Activated naive CD8-positive, alpha-beta T cell treated with anti-CD3 and anti-CD28 coated beads, Interleukin-2, amount 10 ng/mL, durations not matched to agents 7 days and 5 days (primary cell): ENCODE measurements at regions of chr5 and their contacts with region 1.

Region 1: DNA sequence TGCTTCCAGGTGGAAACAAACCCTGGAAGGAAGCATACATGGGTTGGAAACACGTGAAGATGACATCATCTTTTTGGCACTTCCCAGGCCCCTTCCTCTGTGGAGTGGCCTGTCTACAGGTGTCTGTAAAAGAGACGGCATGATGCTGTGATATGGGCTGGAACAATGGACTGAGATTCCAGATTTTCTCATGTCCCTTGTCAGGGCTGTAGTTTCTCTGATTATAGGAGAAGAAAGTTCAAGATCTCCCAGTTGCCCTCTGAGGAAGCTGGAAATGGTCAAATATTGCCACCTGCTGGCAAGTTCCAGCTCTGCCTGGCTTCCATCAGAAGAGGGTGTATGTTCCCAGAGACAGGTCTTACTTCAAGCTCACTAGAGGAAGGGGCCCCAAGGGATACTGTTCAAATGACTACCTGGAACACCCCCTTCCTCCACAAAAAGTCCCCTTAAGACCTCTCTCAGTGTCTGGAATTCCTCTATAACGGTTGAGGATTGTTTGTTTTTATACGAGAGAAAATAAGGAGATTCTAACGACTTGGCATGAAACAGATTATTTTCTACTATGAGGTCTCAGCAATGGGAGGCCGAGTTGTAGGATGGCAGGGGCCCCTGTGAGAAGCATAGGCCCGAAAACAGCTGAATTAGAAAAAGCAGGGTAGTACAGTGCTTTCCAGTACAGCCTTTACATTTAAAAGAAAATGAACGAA is 7.3 kb upstream of the ANXA6 start:
- DNase-seq: peak; percentile 72
- ATAC-seq: peak; percentile 94
- H3K4me3 Mint-ChIP-seq: no peak overlapping the region
- H3K27ac Mint-ChIP-seq: no peak overlapping the region
- H3K4me1 Mint-ChIP-seq: peaks cover 8% of the 10 kb centered on the region
- H3K27me3 Mint-ChIP-seq: peaks cover 4% of the 10 kb centered on the region

Region 2: DNA sequence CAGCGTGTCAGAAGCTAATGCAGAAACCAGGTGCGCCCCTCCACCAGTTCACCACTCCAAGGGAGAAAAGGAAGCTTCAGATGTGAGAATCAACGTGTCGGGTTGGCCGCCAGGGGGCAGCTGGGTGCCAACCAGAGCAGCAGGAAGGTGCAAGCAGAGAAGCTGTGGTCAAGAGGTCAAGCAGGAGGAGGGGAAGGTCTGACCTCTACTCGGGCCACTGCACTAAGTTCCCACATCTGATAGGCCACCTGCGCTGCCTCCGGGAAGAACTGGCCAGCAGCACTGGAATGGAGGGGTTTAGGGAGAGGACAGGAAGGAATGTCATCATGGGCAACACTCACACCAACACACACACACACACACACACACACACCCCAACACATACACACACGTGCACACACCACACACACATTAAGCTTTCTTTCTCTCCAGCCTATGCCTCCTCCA is 38.6 kb before region 1 on chr5:
- POLR2A ChIA-PET with region 1: interaction called, 16 read pairs
- DNase-seq: peak; percentile 76
- ATAC-seq: peak; percentile 57
- H3K4me3 Mint-ChIP-seq: peak overlapping the region; percentile 30
- H3K27ac Mint-ChIP-seq: peak overlapping the region; percentile 92
- H3K4me1 Mint-ChIP-seq: peaks cover 41% of the 10 kb centered on the region
- H3K27me3 Mint-ChIP-seq: no peaks in the 10 kb centered on the region

Region 3: DNA sequence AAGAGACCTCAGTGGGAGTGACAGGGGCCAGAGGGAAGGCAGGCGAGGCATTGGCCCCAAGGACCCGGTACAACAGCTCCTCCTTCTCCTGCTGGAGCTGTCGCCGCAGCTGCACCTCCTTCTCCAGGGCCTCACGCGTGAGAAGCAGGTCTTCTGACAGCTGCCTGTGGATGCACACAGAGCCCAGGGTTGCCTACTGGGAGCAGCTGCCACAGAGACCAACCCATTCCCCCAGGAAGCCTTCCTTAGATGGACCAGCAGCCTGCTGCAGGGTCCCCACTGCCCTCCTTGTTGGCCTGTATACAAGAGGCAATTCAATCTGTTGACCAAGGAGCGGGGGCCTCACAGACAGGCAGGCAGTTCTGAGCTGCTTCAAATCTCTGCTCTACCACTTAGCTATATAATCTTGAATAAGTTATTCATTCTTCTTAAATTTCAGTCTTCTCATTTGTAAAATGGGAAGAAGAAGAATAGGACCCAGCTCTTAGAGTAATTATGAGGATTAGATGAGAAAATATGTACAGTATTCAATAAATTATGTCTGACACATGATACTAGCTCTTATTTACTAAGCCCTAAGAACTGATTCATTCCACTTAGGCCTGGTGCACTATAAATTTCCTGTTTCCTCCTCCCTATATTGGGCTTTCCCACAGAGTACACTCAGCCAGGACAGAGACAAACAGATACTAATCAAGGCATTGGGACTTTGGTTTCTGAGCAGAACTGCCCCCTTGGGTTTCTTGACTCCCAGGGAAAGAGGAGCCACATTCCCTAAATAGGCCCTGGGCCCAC is 18.8 kb after region 1 on chr5:
- POLR2A ChIA-PET with region 1: no interaction called
- DNase-seq: no peak
- ATAC-seq: no peak
- H3K4me3 Mint-ChIP-seq: no peak overlapping the region
- H3K27ac Mint-ChIP-seq: no peak overlapping the region
- H3K4me1 Mint-ChIP-seq: peaks cover 7% of the 10 kb centered on the region
- H3K27me3 Mint-ChIP-seq: no peaks in the 10 kb centered on the region

Region 4: GRCh38 chr5:151239237-151239861 is 74.5 kb after region 1 on chr5:
- POLR2A ChIA-PET with region 1: no interaction called
- DNase-seq: peak; percentile 75
- ATAC-seq: peak; percentile 66
- H3K4me3 Mint-ChIP-seq: peak overlapping the region; percentile 68
- H3K27ac Mint-ChIP-seq: peak overlapping the region; percentile 76
- H3K4me1 Mint-ChIP-seq: peaks cover 32% of the 10 kb centered on the region
- H3K27me3 Mint-ChIP-seq: no peaks in the 10 kb centered on the region